Activated T-helper 2 cell treated with anti-CD3 and anti-CD28 coated beads, Interferon-gamma antibody, Interleukin-2, Interleukin-4, amounts not matched to agents 10 μg/mL and 5 μg/mL and 100 μg/mL, durations not matched to agents 14 hours and 24 hours and 36 hours (primary cell): ENCODE measurements at regions of chr5 and their contacts with region 1.

Region 1: DNA sequence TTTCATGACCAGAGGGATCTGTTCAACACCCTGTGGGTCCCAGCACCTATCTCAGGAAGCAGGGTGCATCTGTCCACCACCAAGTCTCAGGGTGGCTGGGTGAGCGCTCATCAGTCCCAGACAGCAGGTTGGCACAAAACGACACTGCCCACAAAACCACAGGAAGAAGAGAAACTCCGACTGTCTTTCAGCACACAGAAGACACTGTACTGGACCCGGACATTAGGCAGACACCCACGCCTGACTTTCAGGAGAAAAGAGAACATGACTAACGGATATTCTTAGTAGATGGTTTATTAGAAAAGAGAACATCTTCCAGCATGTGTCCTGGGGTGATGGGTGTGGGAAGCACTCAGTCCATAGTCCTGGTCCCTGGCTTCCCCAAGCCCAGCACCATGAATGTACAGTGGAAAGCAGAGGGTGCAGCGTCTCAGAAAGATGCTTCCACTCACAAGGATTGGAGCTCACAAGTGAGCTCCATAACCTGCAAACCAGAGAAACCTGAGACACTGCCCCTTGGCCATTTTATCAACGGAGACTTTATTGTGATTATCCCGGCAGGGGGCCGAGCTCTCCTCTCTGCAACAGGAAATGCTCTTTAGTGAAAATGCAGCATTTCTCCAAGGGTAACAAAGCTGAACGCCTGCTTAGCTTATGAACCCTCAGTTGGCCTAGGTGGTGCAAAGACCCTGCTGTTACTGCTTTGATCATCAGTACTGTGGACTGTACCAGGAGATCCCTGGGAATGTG is 35.8 kb upstream of the LCP2 start:
- DNase-seq: peak; percentile 53
- H3K4me3 Mint-ChIP-seq: peak overlapping the region; percentile 81
- H3K27ac Mint-ChIP-seq: no peak overlapping the region
- H3K4me1 Mint-ChIP-seq: peaks cover 62% of the 10 kb centered on the region
- H3K27me3 Mint-ChIP-seq: no peaks in the 10 kb centered on the region

Region 2: DNA sequence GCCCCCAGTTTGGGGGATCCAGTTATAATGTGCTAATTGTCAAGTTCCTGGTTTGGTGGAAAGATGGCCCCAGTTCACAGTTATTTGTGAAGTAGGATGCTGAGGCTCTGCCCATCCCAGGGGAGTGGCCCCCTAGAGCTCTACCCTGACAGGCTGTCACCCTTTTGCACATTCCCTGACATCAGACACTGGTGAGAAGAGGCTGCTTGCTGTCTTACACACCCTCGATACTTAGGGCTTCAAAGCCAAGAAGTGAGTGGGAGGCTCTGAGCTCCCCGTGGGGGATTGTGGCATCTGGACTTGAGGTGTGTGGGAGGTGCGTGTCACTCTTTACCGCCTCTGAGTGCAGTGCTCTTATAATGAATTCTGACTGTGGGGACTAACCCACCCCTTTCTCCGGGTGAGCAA is 527.8 kb before region 1 on chr5:
- intact Hi-C with region 1: loop called (anchors 5 kb)
- DNase-seq: peak; percentile 41
- H3K4me3 Mint-ChIP-seq: peak overlapping the region; percentile 37
- H3K27ac Mint-ChIP-seq: peak overlapping the region; percentile 88
- H3K4me1 Mint-ChIP-seq: peaks cover 48% of the 10 kb centered on the region
- H3K27me3 Mint-ChIP-seq: no peaks in the 10 kb centered on the region

Region 3: GRCh38 chr5:170267431-170268152 is 65.7 kb before region 1 on chr5:
- intact Hi-C with region 1: loop called (anchors 1 kb)
- DNase-seq: peak; percentile 69
- H3K4me3 Mint-ChIP-seq: peak overlapping the region; percentile 68
- H3K27ac Mint-ChIP-seq: peak overlapping the region; percentile 88
- H3K4me1 Mint-ChIP-seq: peaks cover 79% of the 10 kb centered on the region
- H3K27me3 Mint-ChIP-seq: no peaks in the 10 kb centered on the region

Region 4: GRCh38 chr5:170293273-170293672 is 40.1 kb before region 1 on chr5:
- intact Hi-C with region 1: loop called (anchors 1 kb)
- DNase-seq: peak; percentile 60
- H3K4me3 Mint-ChIP-seq: peak overlapping the region; percentile 98
- H3K27ac Mint-ChIP-seq: peak overlapping the region; percentile 92
- H3K4me1 Mint-ChIP-seq: peaks cover 76% of the 10 kb centered on the region
- H3K27me3 Mint-ChIP-seq: no peaks in the 10 kb centered on the region

Region 5: DNA sequence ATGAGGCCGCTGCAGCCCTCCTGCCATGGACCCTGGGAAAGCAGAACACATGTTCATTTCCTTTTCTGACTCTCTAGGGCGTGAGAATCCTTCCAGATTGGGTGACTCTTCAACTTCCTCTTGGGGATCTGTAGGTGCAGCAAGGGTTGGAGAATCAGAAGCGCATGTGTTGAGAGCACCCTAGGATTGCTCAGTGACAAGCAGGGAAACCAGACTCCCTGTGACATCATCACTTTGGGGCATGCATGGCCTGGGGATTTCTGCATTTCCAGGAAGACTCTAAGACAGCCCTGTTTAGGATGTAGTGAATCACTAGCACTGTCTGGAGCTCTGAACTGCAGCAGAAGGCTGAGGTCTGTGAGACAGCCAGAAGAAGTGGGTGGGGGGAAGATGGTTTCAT is 20.7 kb before region 1 on chr5:
- intact Hi-C with region 1: loop called (anchors 1 kb)
- DNase-seq: no peak
- H3K4me3 Mint-ChIP-seq: peak overlapping the region; percentile 75
- H3K27ac Mint-ChIP-seq: peak overlapping the region; percentile 88
- H3K4me1 Mint-ChIP-seq: peaks cover 50% of the 10 kb centered on the region
- H3K27me3 Mint-ChIP-seq: no peaks in the 10 kb centered on the region